Activated CD4-positive, alpha-beta T cell treated with anti-CD3 and anti-CD28 coated beads, Interleukin-2, amount 10 ng/mL, durations not matched to agents 7 days and 5 days (primary cell): ENCODE measurements at regions of chr3 and their contacts with region 1.

Region 1: GRCh38 chr3:72510247-72510646 is 338.0 kb downstream of the SHQ1 start:
- DNase-seq: no peak
- H3K4me3 Mint-ChIP-seq: no peak overlapping the region
- H3K27ac Mint-ChIP-seq: no peak overlapping the region
- H3K4me1 Mint-ChIP-seq: no peaks in the 10 kb centered on the region
- H3K27me3 Mint-ChIP-seq: no peaks in the 10 kb centered on the region

Region 2: GRCh38 chr3:72496051-72496670 is 14.1 kb before region 1 on chr3:
- CTCF ChIA-PET with region 1: interaction called, 12 read pairs
- POLR2A ChIA-PET with region 1: no interaction called
- DNase-seq: no peak
- H3K4me3 Mint-ChIP-seq: no peak overlapping the region
- H3K27ac Mint-ChIP-seq: no peak overlapping the region
- H3K4me1 Mint-ChIP-seq: no peaks in the 10 kb centered on the region
- H3K27me3 Mint-ChIP-seq: no peaks in the 10 kb centered on the region

Region 3: DNA sequence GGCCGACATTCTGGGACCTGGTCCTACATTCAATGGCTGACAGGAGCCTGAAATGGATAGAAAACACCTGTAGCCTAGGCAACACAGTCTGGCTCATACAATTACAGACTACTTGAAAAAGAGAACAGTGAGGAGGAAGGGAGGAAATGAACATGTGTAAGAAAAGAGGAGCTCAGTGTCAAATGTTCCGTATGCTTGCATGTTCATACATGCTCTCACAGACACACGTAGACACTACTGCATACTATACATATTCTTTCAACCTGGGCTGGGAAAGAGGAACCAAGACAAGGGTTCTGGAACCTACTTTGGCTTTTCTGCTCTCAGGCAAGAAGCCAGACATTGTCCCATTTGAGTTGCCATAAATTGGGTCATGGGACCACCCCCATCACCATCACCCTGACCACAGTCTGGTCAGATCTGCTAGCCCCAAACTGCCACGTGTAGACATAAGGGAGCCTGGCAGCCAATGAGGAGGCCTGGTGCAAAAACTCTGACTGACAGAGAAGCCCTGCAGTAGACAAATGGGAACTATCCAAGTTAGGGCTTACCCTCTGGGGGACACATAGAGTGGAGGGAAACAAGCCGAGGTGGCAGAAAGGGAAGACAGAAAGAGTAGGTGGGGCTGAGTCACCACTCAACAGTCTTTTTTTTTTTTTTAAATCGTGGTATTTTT is 28.0 kb after region 1 on chr3:
- CTCF ChIA-PET with region 1: no interaction called
- POLR2A ChIA-PET with region 1: no interaction called
- DNase-seq: no peak
- H3K4me3 Mint-ChIP-seq: no peak overlapping the region
- H3K27ac Mint-ChIP-seq: no peak overlapping the region
- H3K4me1 Mint-ChIP-seq: peaks cover 6% of the 10 kb centered on the region
- H3K27me3 Mint-ChIP-seq: peaks cover 3% of the 10 kb centered on the region

Region 4: DNA sequence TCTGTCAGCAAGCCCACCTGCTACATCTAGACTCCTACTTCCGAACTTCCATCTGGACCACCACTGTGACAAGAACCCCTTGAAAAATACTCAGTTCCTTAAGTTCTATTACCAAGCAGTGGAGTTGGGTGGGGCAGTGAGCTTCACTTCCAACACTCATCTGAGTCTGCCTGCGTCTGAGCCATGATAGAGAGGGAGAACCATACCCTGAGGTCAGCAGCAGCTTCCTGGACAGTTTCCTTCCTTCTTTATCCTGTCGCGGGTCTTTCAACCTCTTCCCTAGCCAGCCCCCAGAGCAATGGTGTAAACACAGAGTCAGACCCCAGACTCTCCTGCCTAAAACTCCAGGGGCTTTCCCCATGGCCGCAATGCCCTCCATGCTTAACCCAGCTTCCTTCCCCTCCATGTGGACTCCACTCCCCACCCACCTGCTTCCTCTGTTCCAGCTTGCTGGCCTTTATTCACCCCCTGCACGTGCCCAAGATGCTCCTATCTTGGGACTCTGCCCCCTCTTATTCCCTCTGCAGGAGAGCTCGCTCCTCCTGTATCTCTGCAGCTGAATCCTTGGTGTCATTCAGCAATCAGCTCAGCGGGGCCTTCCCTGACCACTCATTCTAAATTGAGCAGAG is 126.8 kb after region 1 on chr3:
- CTCF ChIA-PET with region 1: no interaction called
- POLR2A ChIA-PET with region 1: no interaction called
- DNase-seq: no peak
- H3K4me3 Mint-ChIP-seq: no peak overlapping the region
- H3K27ac Mint-ChIP-seq: no peak overlapping the region
- H3K4me1 Mint-ChIP-seq: peaks cover 23% of the 10 kb centered on the region
- H3K27me3 Mint-ChIP-seq: no peaks in the 10 kb centered on the region